Calu3 (cell line): ENCODE measurements at regions of chr19 and their contacts with region 1.

Region 1: DNA sequence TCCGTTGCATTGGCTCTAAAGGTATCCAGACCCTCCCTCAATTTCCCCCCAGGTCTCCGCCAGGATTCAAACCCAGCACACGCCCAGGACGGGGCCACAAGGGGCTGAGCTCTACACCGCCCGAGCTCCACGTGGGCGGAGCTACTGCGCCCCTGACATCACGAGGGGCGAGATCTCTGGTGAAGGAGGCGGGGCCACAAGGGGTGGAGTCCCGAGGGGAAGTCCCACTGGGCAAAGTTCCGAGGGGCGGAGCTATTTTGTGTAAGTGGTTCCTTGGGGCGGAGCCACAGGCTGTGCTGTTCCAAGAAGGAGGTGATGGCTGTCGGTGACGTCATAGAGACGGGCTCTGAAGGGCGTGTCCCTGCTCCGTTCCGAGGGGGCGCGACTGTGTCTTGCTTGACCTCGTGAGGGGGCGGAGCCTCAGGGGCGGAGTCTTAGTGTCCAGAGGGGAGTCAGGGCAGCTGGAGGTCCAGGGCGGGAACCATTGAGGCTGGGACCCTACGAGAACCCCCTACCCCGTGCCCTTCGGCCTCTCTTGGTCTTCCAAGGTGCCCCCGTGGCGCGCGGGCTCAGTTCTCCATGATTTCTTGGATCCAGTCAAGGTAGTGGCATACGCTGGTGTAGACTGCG is 1.3 kb upstream of the KLK8 start:
- DNase-seq: peak; percentile 96
- H3K4me3 Mint-ChIP-seq: peak overlapping the region; percentile 74
- H3K27ac Mint-ChIP-seq: peak overlapping the region; percentile 80
- H3K4me1 Mint-ChIP-seq: peaks cover 42% of the 10 kb centered on the region
- H3K27me3 Mint-ChIP-seq: peaks cover 54% of the 10 kb centered on the region
- CTCF ChIP-seq: no peak

Region 2: DNA sequence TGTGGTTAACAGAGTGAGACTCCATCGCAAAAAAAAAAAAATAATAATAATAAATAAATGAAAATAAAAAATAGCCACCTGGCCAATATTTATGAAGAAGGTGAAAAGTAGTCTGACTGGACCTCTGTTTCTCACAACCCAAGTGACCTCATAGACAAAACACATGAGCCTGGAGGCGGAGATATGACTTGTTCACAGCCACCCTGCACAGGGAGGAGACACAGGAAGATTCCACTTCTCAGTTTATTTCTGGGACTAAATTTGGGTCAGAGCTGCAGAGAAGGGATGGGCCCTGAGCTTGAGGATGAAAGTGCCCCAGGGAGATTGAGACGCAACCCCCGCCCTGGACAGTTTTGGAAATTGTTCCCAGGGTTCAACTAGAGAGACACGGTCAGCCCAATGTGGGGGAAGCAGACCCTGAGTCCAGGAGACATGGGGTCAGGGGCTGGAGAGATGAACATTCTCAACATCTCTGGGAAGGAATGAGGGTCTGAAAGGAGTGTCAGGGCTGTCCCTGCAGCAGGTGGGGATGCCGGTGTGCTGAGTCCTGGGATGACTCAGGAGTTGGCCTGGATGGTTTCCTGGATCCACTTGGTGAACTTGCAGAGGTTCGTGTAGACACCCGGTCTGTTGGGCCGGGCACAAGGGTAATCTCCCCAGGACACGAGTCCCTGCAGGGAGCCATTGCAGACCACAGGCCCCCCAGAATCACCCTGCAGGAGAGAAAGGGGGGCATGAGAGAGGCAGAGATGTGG is 59.4 kb before region 1 on chr19:
- CTCF ChIA-PET with region 1: no interaction called
- intact Hi-C with region 1: no loop called
- DNase-seq: no peak
- H3K4me3 Mint-ChIP-seq: no peak overlapping the region
- H3K27ac Mint-ChIP-seq: no peak overlapping the region
- H3K4me1 Mint-ChIP-seq: no peaks in the 10 kb centered on the region
- H3K27me3 Mint-ChIP-seq: peaks cover 28% of the 10 kb centered on the region
- CTCF ChIP-seq: no peak

Region 3: GRCh38 chr19:50992666-50993035 is 10.0 kb before region 1 on chr19:
- CTCF ChIA-PET with region 1: interaction called, 10 read pairs
- intact Hi-C with region 1: no loop called
- DNase-seq: peak; percentile 54
- H3K4me3 Mint-ChIP-seq: no peak overlapping the region
- H3K27ac Mint-ChIP-seq: peak overlapping the region; percentile 60
- H3K4me1 Mint-ChIP-seq: peaks cover 30% of the 10 kb centered on the region
- H3K27me3 Mint-ChIP-seq: no peaks in the 10 kb centered on the region
- CTCF ChIP-seq: no peak